Activated T-helper 2 cell treated with anti-CD3 and anti-CD28 coated beads, Interferon-gamma antibody, Interleukin-2, Interleukin-4, amounts not matched to agents 10 μg/mL and 5 μg/mL and 100 μg/mL, durations not matched to agents 14 hours and 24 hours and 36 hours (primary cell): ENCODE measurements at regions of chrX and their contacts with region 1.

Region 1: GRCh38 chrX:147738265-147738664 is 173.5 kb upstream of the FMR1 start:
- DNase-seq: no peak
- H3K4me3 Mint-ChIP-seq: peak overlapping the region; percentile 41
- H3K27ac Mint-ChIP-seq: peak overlapping the region; percentile 76
- H3K4me1 Mint-ChIP-seq: peaks cover 27% of the 10 kb centered on the region
- H3K27me3 Mint-ChIP-seq: no peaks in the 10 kb centered on the region

Region 2: DNA sequence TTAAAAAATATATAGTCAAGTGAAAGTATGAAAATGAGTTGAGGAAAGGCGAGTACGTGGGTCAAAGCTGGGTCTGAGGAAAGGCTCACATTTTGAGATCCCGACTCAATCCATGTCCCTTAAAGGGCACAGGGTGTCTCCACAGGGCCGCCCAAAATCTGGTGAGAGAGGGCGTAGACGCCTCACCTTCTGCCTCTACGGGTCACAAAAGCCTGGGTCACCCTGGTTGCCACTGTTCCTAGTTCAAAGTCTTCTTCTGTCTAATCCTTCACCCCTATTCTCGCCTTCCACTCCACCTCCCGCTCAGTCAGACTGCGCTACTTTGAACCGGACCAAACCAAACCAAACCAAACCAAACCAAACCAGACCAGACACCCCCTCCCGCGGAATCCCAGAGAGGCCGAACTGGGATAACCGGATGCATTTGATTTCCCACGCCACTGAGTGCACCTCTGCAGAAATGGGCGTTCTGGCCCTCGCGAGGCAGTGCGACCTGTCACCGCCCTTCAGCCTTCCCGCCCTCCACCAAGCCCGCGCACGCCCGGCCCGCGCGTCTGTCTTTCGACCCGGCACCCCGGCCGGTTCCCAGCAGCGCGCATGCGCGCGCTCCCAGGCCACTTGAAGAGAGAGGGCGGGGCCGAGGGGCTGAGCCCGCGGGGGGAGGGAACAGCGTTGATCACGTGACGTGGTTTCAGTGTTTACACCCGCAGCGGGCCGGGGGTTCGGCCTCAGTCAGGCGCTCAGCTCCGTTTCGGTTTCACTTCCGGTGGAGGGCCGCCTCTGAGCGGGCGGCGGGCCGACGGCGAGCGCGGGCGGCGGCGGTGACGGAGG is 173.1 kb after region 1 on chrX and contains the start of gene FMR1:
- intact Hi-C with region 1: loop called (anchors 10 kb)
- DNase-seq: peak; percentile 92
- H3K4me3 Mint-ChIP-seq: peak within 1 kb of the TSS; percentile 95
- H3K27ac Mint-ChIP-seq: peak within 1 kb of the TSS; percentile 86
- H3K4me1 Mint-ChIP-seq: peaks cover 27% of the 10 kb centered on the region
- H3K27me3 Mint-ChIP-seq: peaks cover 3% of the 10 kb centered on the region
- total RNA-seq, gene FMR1: 34.7 TPM in 2 replicates